Mammary epithelial cell (primary cell): ENCODE measurements at regions of chr16 and their contacts with region 1.

Region 1: GRCh38 chr16:6247775-6248174 is 1084.9 kb upstream of the RBFOX1 start:
- DNase-seq: no peak
- H3K4me3 ChIP-seq: no peak overlapping the region
- H3K27ac ChIP-seq: no peak overlapping the region
- H3K4me1 ChIP-seq: no peaks in the 10 kb centered on the region
- H3K27me3 ChIP-seq: no peaks in the 10 kb centered on the region
- CTCF ChIP-seq: no peak

Region 2: GRCh38 chr16:6193718-6194117 is 54.1 kb before region 1 on chr16:
- CTCF ChIA-PET with region 1: no interaction called
- dilution Hi-C with region 1: loop called (anchors 5 kb)
- in situ Hi-C with region 1: no loop called
- intact Hi-C with region 1: no loop called
- DNase-seq: peak; percentile 2
- H3K4me3 ChIP-seq: no peak overlapping the region
- H3K27ac ChIP-seq: no peak overlapping the region
- H3K4me1 ChIP-seq: no peaks in the 10 kb centered on the region
- H3K27me3 ChIP-seq: no peaks in the 10 kb centered on the region
- CTCF ChIP-seq: no peak

Region 3: DNA sequence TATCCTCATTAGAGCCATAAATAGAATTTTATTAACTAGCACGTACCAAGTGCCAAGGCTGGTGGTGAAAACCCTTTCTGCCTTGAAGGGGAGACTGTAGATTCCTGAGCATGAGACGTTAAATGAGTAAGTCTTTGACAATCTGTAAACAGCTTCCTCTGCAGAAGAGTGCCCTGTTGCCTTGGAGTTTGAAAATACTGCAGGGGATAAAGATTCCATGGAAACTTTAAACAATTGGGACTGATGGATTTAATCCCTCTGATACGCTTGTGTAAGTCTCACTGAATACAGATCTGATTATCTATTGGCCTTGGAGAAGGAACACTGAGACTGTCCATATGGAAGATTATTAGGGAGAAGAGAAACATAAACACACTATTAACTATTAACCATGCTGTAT is 31.5 kb after region 1 on chr16:
- CTCF ChIA-PET with region 1: no interaction called
- dilution Hi-C with region 1: no loop called
- in situ Hi-C with region 1: no loop called
- intact Hi-C with region 1: no loop called
- DNase-seq: no peak
- H3K4me3 ChIP-seq: no peak overlapping the region
- H3K27ac ChIP-seq: no peak overlapping the region
- H3K4me1 ChIP-seq: no peaks in the 10 kb centered on the region
- H3K27me3 ChIP-seq: no peaks in the 10 kb centered on the region
- CTCF ChIP-seq: no peak

Region 4: GRCh38 chr16:6574146-6574545 is 326.4 kb after region 1 on chr16:
- CTCF ChIA-PET with region 1: interaction called, 30 read pairs
- dilution Hi-C with region 1: no loop called
- in situ Hi-C with region 1: no loop called
- intact Hi-C with region 1: no loop called
- DNase-seq: no peak
- H3K4me3 ChIP-seq: no peak overlapping the region
- H3K27ac ChIP-seq: no peak overlapping the region
- H3K4me1 ChIP-seq: no peaks in the 10 kb centered on the region
- H3K27me3 ChIP-seq: no peaks in the 10 kb centered on the region
- CTCF ChIP-seq: no peak